ENCODE measurements at regions of chr12 and their contacts with region 1.

Region 1: GRCh38 chr12:120710031-120710804 is at the start of gene UNC119B:
- DNase-seq: peak; percentile 72 to 82
- ATAC-seq: peak; percentile 86 to 91 (median 88)
- H3K4me3 ChIP-seq: peak within 1 kb of the TSS; percentile 92
- H3K27ac ChIP-seq: peak within 1 kb of the TSS; percentile 85
- H3K4me1 ChIP-seq: peaks cover 18% of the 10 kb centered on the region
- H3K27me3 ChIP-seq: no peaks in the 10 kb centered on the region
- CTCF ChIP-seq: no peak
- total RNA-seq, gene UNC119B: 7.5 to 10.9 (median 7.9) TPM

Region 2: DNA sequence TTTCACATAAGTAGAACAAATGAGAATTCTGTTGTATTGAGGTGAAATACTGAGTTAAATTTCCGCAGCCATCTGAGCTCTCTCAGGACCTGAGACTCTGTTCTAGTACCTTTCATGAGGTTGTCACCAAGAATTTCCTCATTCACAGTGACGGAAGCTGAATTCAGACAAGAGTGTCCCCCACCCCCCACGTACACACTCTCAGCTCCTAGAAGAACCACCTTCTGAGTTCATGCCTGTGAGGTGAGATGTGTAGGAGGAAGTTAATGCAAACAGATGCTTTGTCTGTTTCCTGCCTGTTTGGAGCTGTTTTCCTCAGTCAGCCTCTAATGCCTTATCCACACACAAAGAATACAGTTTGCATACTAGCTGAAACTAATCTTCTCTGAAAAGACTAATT is 702.9 kb before region 1 on chr12:
- intact Hi-C with region 1: no loop called
- DNase-seq: no peak
- ATAC-seq: no peak
- H3K4me3 ChIP-seq: no peak overlapping the region
- H3K27ac ChIP-seq: no peak overlapping the region
- H3K4me1 ChIP-seq: no peaks in the 10 kb centered on the region
- H3K27me3 ChIP-seq: peaks cover 0 to 5% (median 3%) of the 10 kb centered on the region in 3 donors
- CTCF ChIP-seq: no peak

Region 3: DNA sequence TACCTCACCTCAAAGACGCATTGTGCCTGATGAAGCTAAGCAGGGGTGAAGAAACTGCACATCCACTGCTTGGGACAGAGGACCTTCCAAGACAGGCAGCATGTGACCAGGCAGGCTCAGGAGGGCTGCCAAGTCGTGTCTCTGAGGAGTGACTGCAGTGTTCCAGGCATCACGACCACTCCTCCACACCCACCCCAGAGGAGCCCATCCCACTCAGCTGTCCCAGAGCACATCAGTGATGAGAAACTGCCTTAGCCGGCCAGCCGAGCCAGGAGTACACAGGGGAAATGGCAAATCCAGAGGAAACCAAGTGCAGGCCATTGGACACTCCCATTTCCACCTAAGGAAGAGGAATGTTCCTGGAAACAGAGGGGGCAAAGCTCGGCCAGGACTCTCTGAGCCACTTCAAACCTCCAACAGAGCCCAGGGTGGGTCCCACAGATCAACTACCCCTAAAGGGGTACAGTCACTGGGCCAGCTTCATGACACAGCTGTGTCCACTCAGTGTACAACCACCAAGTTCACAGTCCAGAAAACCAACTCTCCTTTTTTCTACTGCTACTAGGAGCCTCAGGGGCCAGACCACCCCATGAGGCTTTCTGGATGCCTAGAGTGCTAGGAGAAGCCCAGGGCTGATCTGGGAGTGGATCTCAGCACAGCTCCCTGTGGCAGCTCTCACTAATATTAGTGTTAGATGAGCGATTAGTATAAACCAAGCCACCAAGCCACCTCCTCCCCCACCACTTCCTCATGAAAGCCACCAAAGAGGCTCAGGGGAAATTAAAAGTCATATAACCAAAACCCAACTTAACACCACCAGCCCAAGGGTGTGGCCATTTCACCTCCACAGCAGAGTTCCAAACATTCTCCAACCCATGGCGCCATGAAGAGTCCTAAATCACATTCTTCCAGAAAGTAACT is 460.1 kb before region 1 on chr12:
- intact Hi-C with region 1: no loop called
- DNase-seq: peak; percentile 88 to 92
- ATAC-seq: peak; percentile 33 to 66 (median 52)
- H3K4me3 ChIP-seq: peak overlapping the region; percentile 49
- H3K27ac ChIP-seq: peak overlapping the region; percentile 75
- H3K4me1 ChIP-seq: peaks cover 78% of the 10 kb centered on the region
- H3K27me3 ChIP-seq: no peaks in the 10 kb centered on the region
- CTCF ChIP-seq: no peak

Region 4: DNA sequence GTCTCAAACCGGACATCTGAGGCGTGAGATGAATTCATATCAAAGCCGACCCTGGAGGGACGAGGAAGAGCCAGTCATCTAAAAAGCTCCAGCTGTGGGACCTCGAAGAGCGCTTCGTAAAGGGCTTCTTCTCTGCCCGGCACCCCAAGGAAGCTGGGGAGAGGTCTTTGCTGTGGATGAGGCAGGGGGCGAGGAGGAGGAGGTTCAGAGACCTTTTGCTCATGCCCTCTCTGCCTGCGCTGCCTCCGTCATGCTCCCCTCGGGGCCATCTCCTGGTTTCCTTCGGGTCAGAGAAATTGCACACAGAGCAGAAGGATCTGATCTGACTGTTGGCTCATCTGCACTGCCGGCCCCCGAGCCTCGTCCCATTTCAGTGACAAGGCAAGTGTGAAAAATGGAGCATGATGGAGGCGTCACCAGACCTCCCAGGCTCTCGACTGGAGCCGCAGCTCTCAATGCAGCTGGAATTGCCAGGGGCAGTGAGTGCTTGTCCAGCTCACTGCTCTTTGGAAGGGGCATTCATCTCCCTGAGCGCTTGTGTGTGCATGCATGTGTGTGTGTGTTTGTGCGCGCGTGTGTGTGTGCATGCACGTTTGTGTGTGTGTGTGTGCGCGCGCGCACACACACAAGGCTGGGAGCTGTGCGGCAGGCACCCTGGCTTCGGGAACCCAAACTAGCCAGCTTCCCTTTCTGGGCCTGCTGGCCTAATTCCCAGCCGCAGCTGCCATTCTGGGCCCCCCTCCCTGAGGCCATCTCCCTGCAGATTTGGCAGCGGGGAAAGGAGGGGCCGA is 60.6 kb before region 1 on chr12:
- intact Hi-C with region 1: loop called (anchors 2 kb)
- DNase-seq: no peak
- ATAC-seq: no peak
- H3K4me3 ChIP-seq: peak overlapping the region; percentile 54
- H3K27ac ChIP-seq: peak overlapping the region; percentile 54
- H3K4me1 ChIP-seq: peaks cover 6% of the 10 kb centered on the region
- H3K27me3 ChIP-seq: peaks cover 0 to 22% (median 0%) of the 10 kb centered on the region in 3 donors
- CTCF ChIP-seq: no peak

Region 5: GRCh38 chr12:120692524-120693033 is 17.6 kb before region 1 on chr12:
- intact Hi-C with region 1: loop called (anchors 2 kb)
- DNase-seq: no peak
- ATAC-seq: peak in 3 of 4 donors; percentile 62 to 66 (median 63)
- H3K4me3 ChIP-seq: no peak overlapping the region
- H3K27ac ChIP-seq: peak overlapping the region; percentile 38
- H3K4me1 ChIP-seq: peaks cover 79% of the 10 kb centered on the region
- H3K27me3 ChIP-seq: no peaks in the 10 kb centered on the region
- CTCF ChIP-seq: no peak

Region 6: GRCh38 chr12:120820885-120821510 is 110.8 kb after region 1 on chr12:
- intact Hi-C with region 1: no loop called
- DNase-seq: no peak
- ATAC-seq: no peak
- H3K4me3 ChIP-seq: no peak overlapping the region
- H3K27ac ChIP-seq: no peak overlapping the region
- H3K4me1 ChIP-seq: peaks cover 21% of the 10 kb centered on the region
- H3K27me3 ChIP-seq: no peaks in the 10 kb centered on the region
- CTCF ChIP-seq: no peak

Measured in psoas muscle (tissue), 8 donors.